Activated naive CD4-positive, alpha-beta T cell treated with anti-CD3 and anti-CD28 coated beads, Interleukin-2, amount 10 ng/mL, durations not matched to agents 7 days and 5 days (primary cell): ENCODE measurements at regions of chr6 and their contacts with region 1.

Region 1: GRCh38 chr6:169831450-169832246 is 80.2 kb downstream of the ERMARD start:
- DNase-seq: peak; percentile 77
- H3K4me3 Mint-ChIP-seq: no peak overlapping the region
- H3K27ac Mint-ChIP-seq: no peak overlapping the region
- H3K4me1 Mint-ChIP-seq: no peaks in the 10 kb centered on the region
- H3K27me3 Mint-ChIP-seq: peaks cover 40% of the 10 kb centered on the region

Region 2: DNA sequence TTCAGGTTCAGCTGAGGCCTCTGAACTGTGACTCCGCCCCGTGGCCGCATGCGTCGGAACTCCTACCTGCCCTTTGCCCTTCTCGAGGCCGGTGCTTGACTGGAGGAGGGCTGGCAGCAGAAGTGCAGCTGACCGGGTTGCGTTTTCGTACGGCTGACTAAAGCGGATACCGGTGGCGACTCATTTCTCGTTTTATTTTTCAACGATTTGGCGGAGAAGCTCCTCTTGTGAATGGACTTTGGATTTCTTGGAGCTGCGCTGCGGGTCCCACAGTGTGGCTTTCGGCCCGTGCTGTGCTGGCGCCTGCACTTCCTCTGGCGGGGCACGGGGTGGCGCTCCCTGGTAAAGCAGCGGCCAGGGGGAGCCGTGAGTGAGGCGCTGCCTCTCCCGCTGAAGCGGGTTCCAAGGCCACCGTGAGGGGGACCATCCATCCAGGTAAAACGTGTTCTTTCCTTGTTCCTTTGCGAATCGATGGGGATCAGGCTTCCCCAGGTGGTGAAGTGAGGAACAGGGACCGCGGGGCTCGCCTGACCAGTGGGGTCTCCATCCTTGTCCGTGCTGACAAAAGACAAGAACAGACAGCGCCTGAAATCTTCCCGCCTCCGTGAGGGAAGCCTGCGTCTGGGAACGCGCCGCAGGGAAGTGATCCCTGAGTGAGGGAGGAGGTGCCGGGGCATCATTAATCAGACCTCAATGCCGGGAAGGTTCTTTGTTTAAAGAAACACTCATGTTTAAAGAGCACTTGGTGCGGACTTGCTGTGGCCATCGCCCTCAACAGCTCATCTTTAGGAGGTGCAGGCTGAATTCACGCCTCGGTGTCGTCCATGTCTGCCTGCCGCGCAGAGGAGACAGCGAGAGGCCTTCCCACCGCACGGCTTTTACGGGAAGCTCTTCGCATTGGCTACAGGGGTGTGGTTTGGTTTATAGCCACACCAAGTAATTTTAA is 41.4 kb before region 1 on chr6:
- CTCF ChIA-PET with region 1: interaction called, 17 read pairs
- DNase-seq: peak; percentile 79
- H3K4me3 Mint-ChIP-seq: peak overlapping the region; percentile 72
- H3K27ac Mint-ChIP-seq: no peak overlapping the region
- H3K4me1 Mint-ChIP-seq: peaks cover 20% of the 10 kb centered on the region
- H3K27me3 Mint-ChIP-seq: peaks cover 61% of the 10 kb centered on the region

Region 3: DNA sequence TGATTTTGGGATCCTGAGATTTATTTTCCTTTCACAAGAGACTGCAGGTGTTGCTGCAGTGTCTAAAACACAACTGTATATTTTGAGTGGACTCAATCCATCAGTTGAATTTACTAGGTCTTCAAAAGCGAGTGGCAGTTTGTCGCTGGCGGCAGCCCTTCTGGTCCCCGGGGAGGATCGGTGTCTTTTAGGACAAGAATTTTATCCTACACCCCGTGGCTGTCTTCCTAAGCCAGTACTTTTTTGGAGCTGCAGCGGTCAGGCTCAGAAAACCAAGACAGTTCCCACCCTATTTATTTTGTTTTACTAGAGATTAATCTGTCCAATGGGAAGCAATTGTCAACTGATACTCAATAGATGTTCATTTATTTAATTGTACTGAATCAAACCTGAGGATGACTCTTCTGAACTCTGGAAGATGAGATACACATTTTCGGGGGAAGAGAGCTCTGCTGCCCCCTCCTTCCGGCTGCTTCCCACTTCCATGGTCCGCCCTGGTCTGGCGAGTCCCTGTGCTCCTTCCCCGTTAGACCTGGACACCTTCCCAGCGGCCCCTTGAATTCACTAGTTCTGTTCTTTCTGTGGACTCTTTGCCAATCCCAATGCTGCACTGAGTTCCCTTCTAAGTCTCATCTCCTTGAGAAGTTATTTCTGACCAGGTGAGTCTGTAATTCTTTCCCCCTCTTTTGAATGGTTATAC is 10.4 kb after region 1 on chr6:
- CTCF ChIA-PET with region 1: interaction called, 14 read pairs
- DNase-seq: no peak
- H3K4me3 Mint-ChIP-seq: no peak overlapping the region
- H3K27ac Mint-ChIP-seq: no peak overlapping the region
- H3K4me1 Mint-ChIP-seq: no peaks in the 10 kb centered on the region
- H3K27me3 Mint-ChIP-seq: peaks cover 19% of the 10 kb centered on the region

Region 4: GRCh38 chr6:169886631-169887227 is 55.1 kb after region 1 on chr6:
- CTCF ChIA-PET with region 1: no interaction called
- DNase-seq: no peak
- H3K4me3 Mint-ChIP-seq: no peak overlapping the region
- H3K27ac Mint-ChIP-seq: no peak overlapping the region
- H3K4me1 Mint-ChIP-seq: no peaks in the 10 kb centered on the region
- H3K27me3 Mint-ChIP-seq: peaks cover 29% of the 10 kb centered on the region

Region 5: DNA sequence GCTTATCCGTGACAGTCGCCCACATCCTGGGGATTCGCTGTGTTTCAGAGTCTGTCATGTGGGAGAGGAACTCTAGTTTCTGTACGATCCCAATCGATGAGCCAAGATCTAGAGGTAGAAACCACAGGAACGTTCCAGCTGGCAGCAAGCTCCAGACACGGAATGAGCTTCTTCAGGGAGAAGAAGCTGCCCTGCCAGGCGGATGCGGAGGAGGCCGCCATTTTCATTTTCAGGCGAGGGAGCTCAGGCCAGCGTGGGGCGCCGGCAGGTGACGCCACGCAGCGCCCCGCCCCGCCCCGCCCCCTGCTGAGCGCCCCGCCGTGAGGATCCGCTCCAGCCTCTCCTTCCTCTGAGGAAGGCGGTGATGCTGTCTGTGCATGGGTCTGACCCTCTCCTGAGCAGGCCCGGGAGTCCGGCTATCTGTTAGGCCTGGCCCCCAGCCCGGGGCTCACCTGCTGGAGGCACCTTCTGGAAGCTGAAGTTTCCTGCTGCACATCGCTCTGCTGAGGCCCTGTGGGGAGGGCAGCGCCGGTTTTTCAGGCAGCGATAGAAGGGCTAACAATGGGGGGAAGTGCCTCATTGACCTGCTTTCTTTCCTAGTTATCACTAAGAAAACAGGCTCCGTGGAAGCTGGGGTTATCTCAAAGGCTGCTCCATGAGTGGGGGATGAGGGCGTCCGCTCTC is 67.3 kb after region 1 on chr6:
- CTCF ChIA-PET with region 1: no interaction called
- DNase-seq: no peak
- H3K4me3 Mint-ChIP-seq: no peak overlapping the region
- H3K27ac Mint-ChIP-seq: no peak overlapping the region
- H3K4me1 Mint-ChIP-seq: no peaks in the 10 kb centered on the region
- H3K27me3 Mint-ChIP-seq: no peaks in the 10 kb centered on the region

Region 6: GRCh38 chr6:170291271-170292110 is 459.8 kb after region 1 on chr6:
- CTCF ChIA-PET with region 1: interaction called, 20 read pairs
- DNase-seq: peak; percentile 50
- H3K4me3 Mint-ChIP-seq: peak overlapping the region; percentile 62
- H3K27ac Mint-ChIP-seq: no peak overlapping the region
- H3K4me1 Mint-ChIP-seq: peaks cover 49% of the 10 kb centered on the region
- H3K27me3 Mint-ChIP-seq: peaks cover 99% of the 10 kb centered on the region

Region 7: GRCh38 chr6:170529839-170530469 is 698.3 kb after region 1 on chr6:
- CTCF ChIA-PET with region 1: interaction called, 21 read pairs
- DNase-seq: peak; percentile 77
- H3K4me3 Mint-ChIP-seq: no peak overlapping the region
- H3K27ac Mint-ChIP-seq: no peak overlapping the region
- H3K4me1 Mint-ChIP-seq: peaks cover 10% of the 10 kb centered on the region
- H3K27me3 Mint-ChIP-seq: peaks cover 3% of the 10 kb centered on the region